HEK293 (cell line): ENCODE measurements at regions of chr7 and their contacts with region 1.

Region 1: GRCh38 chr7:5494683-5495561 is 71.3 kb upstream of the TNRC18 start:
- H3K4me3 ChIP-seq: no peak overlapping the region
- H3K27ac ChIP-seq: no peak overlapping the region
- H3K4me1 ChIP-seq: no peaks in the 10 kb centered on the region
- CTCF ChIP-seq: peak; percentile 79

Region 2: DNA sequence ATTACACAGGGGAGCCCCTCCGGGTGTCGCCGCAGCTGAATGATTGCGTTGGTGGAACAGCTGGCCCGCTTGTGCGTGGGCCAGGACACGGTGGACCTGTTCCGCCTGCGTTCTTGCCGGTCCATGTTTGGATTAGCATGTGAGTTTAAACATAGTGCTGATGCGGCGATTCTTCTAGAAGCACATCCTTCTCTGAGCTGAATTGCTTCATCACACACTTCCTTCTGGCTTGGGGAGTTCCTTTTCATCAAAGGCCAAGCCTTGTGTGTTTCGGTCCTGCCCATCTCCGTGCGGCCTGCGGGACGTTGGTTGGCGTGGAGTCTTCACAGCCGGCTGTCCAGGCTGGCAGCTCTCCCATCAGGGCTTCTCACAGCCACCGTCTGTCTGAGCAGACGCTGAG is 257.6 kb before region 1 on chr7:
- CTCF ChIA-PET with region 1: interaction called, 15 read pairs
- POLR2A ChIA-PET with region 1: interaction called, 3 read pairs
- H3K4me3 ChIP-seq: no peak overlapping the region
- H3K27ac ChIP-seq: no peak overlapping the region
- H3K4me1 ChIP-seq: no peaks in the 10 kb centered on the region
- CTCF ChIP-seq: no peak

Region 3: GRCh38 chr7:5546626-5547025 is 51.7 kb after region 1 on chr7:
- CTCF ChIA-PET with region 1: no interaction called
- POLR2A ChIA-PET with region 1: no interaction called
- H3K4me3 ChIP-seq: no peak overlapping the region
- H3K27ac ChIP-seq: no peak overlapping the region
- H3K4me1 ChIP-seq: no peaks in the 10 kb centered on the region; the same call in 1 of the 2 replicates
- CTCF ChIP-seq: no peak

Region 4: DNA sequence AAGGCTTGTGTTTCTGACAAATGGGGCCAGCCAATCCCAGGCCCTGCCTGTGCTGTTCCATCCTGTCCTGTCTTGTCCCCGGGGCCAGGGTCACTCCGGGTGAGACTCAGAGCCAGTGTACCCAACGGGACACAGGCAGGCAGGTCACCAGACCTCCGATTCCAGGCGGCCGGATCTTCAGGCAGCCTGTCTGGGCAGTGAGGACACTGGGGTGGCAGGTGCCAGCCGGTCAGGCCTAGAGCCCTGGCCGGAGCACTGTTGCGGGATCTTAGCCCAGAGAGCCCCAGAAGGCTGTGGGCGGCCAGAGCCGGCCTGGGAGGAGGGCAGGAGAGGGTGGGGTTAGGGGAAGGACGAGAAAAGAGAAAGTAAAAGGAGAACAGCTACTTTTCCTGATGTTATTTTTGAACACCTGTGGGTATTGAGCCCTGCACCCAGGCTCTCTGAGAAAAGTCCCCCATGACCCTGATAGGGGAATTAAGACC is 63.0 kb after region 1 on chr7:
- CTCF ChIA-PET with region 1: interaction called, 87 read pairs
- POLR2A ChIA-PET with region 1: interaction called, 7 read pairs
- H3K4me3 ChIP-seq: no peak overlapping the region
- H3K27ac ChIP-seq: no peak overlapping the region
- H3K4me1 ChIP-seq: 0 out of 2 replicates have a peak, but pooled peaks cover 2% of the 10 kb centered on the region
- CTCF ChIP-seq: no peak

Region 5: GRCh38 chr7:5677538-5678294 is 182.8 kb after region 1 on chr7:
- CTCF ChIA-PET with region 1: interaction called, 42 read pairs
- POLR2A ChIA-PET with region 1: interaction called, 6 read pairs
- H3K4me3 ChIP-seq: no peak overlapping the region
- H3K27ac ChIP-seq: no peak overlapping the region
- H3K4me1 ChIP-seq: no peaks in the 10 kb centered on the region
- CTCF ChIP-seq: peak; percentile 41; the same call in 1 of the 2 replicates

Region 6: DNA sequence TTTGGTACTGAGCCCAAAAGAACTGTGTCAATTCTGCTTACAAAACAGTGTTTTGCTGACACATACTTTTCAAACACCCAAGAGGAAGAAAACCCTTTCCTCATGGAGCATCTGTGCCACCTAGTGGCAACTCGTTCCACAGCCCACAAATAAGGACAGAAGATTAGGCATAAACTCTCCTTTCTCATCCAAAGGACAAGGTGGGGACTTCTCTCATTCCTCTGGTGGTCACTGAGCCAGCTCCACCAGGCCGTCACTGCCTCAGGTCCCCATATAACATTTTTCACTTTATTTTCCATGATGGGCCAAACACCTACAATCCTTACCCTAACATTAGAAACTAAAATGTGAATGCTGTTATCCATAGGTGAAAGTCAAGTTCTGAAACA is 209.6 kb after region 1 on chr7:
- CTCF ChIA-PET with region 1: interaction called, 33 read pairs
- POLR2A ChIA-PET with region 1: no interaction called
- H3K4me3 ChIP-seq: no peak overlapping the region
- H3K27ac ChIP-seq: no peak overlapping the region
- H3K4me1 ChIP-seq: no peaks in the 10 kb centered on the region; the same call in 1 of the 2 replicates
- CTCF ChIP-seq: no peak; the same call in 1 of the 2 replicates

Region 7: GRCh38 chr7:6008668-6009611 is 514.0 kb after region 1 on chr7 and contains the starts of genes AIMP2 and PMS2:
- CTCF ChIA-PET with region 1: no interaction called
- POLR2A ChIA-PET with region 1: no interaction called
- H3K4me3 ChIP-seq: peak within 1 kb of the TSS; percentile 69
- H3K27ac ChIP-seq: peak within 1 kb of the TSS; percentile 80
- H3K4me1 ChIP-seq: no peaks in the 10 kb centered on the region; the same call in 1 of the 2 replicates
- CTCF ChIP-seq: peak; percentile 85